ENCODE measurements at regions of chr16 and their contacts with region 1.

Region 1: GRCh38 chr16:84726079-84726668 is 26.4 kb downstream of the USP10 start:
- DNase-seq: peak; percentile 92 to 94
- ATAC-seq: peak; percentile 76 to 87 (median 78)
- H3K4me3 ChIP-seq: no peak overlapping the region
- H3K27ac ChIP-seq: peak overlapping the region; percentile 34
- H3K4me1 ChIP-seq: peaks cover 62% of the 10 kb centered on the region
- H3K27me3 ChIP-seq: no peaks in the 10 kb centered on the region
- CTCF ChIP-seq: peak; percentile 96

Region 2: DNA sequence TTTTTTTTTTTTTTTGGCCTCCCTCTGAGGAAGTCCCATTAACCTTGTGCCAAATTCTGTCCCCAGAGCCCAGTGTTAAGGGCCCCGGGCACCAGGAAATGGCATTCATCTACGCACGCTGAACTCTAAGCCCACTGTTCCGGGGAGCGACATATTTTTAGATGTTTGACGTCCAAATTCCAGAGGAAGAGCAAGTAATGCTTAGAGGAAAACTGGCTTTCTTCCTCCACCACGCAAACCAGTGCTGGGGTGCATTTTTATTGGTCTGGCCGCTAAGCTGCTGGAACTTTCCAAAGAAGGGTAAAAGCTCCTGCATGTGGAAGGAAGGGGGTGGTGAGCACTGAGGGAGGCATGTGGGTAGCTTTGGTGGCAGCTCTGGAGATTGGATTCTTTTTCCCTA is 423.2 kb before region 1 on chr16:
- intact Hi-C with region 1: no loop called
- DNase-seq: no peak
- ATAC-seq: peak in 1 of 4 donors; percentile 33
- H3K4me3 ChIP-seq: no peak overlapping the region
- H3K27ac ChIP-seq: no peak overlapping the region
- H3K4me1 ChIP-seq: no peaks in the 10 kb centered on the region
- H3K27me3 ChIP-seq: peaks cover 0 to 20% (median 7%) of the 10 kb centered on the region in 3 donors
- CTCF ChIP-seq: no peak

Region 3: GRCh38 chr16:84629580-84629979 is 96.6 kb before region 1 on chr16:
- intact Hi-C with region 1: loop called (anchors 10 kb)
- DNase-seq: no peak
- ATAC-seq: no peak
- H3K4me3 ChIP-seq: no peak overlapping the region
- H3K27ac ChIP-seq: no peak overlapping the region
- H3K4me1 ChIP-seq: no peaks in the 10 kb centered on the region
- H3K27me3 ChIP-seq: no peaks in the 10 kb centered on the region
- CTCF ChIP-seq: no peak

Region 4: GRCh38 chr16:84672276-84673202 is 53.6 kb before region 1 on chr16:
- intact Hi-C with region 1: loop called (anchors 2 to 5 kb)
- DNase-seq: peak; percentile 77 to 90
- ATAC-seq: peak; percentile 83 to 95 (median 90)
- H3K4me3 ChIP-seq: no peak overlapping the region
- H3K27ac ChIP-seq: no peak overlapping the region
- H3K4me1 ChIP-seq: no peaks in the 10 kb centered on the region
- H3K27me3 ChIP-seq: no peaks in the 10 kb centered on the region
- CTCF ChIP-seq: peak; percentile 95